ENCODE measurements at regions of chr7 and their contacts with region 1.

Region 1: GRCh38 chr7:111568870-111569490 is 6.7 kb upstream of the IMMP2L start:
- DNase-seq: no peak
- ATAC-seq: no peak
- H3K4me3 ChIP-seq: no peak overlapping the region
- H3K27ac ChIP-seq: no peak overlapping the region
- H3K4me1 ChIP-seq: no peaks in the 10 kb centered on the region
- H3K27me3 ChIP-seq: peaks cover 0 to 14% of the 10 kb centered on the region in 2 experiments; a peak in 1 of 5 replicates
- CTCF ChIP-seq: no peak
- EP300 ChIP-seq: no peak
- POLR2A ChIP-seq: no peak
- RAD21 ChIP-seq: no peak

Region 2: DNA sequence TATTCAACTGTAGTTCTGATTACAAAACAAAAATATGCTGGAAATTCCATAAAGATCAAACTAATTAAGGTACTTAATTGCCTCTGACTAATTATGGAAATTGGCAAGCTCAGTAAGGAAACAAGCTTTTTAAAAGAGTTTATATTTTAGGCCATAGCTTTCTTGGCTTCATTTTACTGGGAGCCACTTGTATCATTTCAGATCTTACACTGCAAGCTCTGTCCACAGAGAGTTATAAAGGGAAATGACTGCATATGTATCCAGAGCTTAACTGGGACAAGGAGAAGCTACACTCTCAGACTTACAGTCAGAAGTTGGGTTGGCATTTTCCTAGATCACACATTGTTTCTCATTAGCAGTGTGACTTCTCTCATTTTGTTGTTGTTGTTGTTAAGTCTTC is 385.7 kb before region 1 on chr7:
- CTCF ChIA-PET with region 1: no interaction called
- POLR2A ChIA-PET with region 1: no interaction called
- in situ Hi-C with region 1: no loop called
- intact Hi-C with region 1: no loop called
- DNase-seq: no peak
- ATAC-seq: no peak
- H3K4me3 ChIP-seq: no peak overlapping the region
- H3K27ac ChIP-seq: no peak overlapping the region
- H3K4me1 ChIP-seq: no peaks in the 10 kb centered on the region
- H3K27me3 ChIP-seq: no peaks in the 10 kb centered on the region
- CTCF ChIP-seq: no peak
- EP300 ChIP-seq: no peak
- POLR2A ChIP-seq: no peak
- RAD21 ChIP-seq: no peak

Region 3: GRCh38 chr7:111607621-111608020 is 38.6 kb after region 1 on chr7:
- CTCF ChIA-PET with region 1: no interaction called
- POLR2A ChIA-PET with region 1: no interaction called
- in situ Hi-C with region 1: no loop called
- intact Hi-C with region 1: loop called (anchors 1 kb)
- DNase-seq: no peak
- ATAC-seq: no peak
- H3K4me3 ChIP-seq: no peak overlapping the region
- H3K27ac ChIP-seq: no peak overlapping the region
- H3K4me1 ChIP-seq: no peaks in the 10 kb centered on the region
- H3K27me3 ChIP-seq: 0 out of 5 replicates have a peak, but pooled peaks cover 0 to 2% of the 10 kb centered on the region in 2 experiments
- CTCF ChIP-seq: no peak
- EP300 ChIP-seq: no peak
- POLR2A ChIP-seq: no peak
- RAD21 ChIP-seq: no peak

Region 4: DNA sequence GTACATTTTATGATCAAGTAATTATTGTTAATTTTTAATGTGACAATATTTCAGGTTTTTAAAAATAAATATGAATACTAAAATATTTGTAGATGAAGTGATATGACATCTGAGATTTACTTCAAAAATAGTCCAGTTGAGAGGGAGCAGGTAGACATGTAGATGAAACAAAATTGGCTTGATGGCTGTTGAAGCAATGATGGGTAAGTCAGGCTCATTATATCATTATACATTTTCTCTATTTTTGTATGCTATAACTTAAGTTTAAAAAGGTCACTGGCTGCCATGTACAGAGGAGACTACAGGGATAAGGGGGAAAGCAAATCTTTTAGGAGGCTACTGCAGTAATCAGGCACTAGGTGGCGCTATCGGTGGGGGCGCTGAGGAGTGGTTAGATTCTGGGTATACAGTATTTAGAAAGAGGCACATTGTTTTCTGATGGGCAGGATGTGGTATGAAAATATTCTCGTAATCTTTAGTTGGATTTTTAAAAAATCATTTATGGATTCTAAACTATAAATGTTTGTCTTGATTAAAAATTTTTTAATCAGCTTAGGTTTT is 183.1 kb after region 1 on chr7:
- CTCF ChIA-PET with region 1: no interaction called
- POLR2A ChIA-PET with region 1: no interaction called
- in situ Hi-C with region 1: no loop called
- intact Hi-C with region 1: no loop called
- DNase-seq: peak; percentile 54
- ATAC-seq: peak; percentile 96
- H3K4me3 ChIP-seq: no peak overlapping the region
- H3K27ac ChIP-seq: no peak overlapping the region
- H3K4me1 ChIP-seq: peaks cover 28% of the 10 kb centered on the region
- H3K27me3 ChIP-seq: no peaks in the 10 kb centered on the region
- CTCF ChIP-seq: peak; percentile 79
- EP300 ChIP-seq: no peak
- POLR2A ChIP-seq: no peak
- RAD21 ChIP-seq: 0 out of 2 replicates have a peak, but pooled peaks have one; percentile 34